HEK293T (cell line): ENCODE measurements at regions of chr12 and their contacts with region 1.

Region 1: GRCh38 chr12:53180220-53180930 is at the starts of genes CSAD and ZNF740:
- DNase-seq: peak; percentile 98

Region 2: DNA sequence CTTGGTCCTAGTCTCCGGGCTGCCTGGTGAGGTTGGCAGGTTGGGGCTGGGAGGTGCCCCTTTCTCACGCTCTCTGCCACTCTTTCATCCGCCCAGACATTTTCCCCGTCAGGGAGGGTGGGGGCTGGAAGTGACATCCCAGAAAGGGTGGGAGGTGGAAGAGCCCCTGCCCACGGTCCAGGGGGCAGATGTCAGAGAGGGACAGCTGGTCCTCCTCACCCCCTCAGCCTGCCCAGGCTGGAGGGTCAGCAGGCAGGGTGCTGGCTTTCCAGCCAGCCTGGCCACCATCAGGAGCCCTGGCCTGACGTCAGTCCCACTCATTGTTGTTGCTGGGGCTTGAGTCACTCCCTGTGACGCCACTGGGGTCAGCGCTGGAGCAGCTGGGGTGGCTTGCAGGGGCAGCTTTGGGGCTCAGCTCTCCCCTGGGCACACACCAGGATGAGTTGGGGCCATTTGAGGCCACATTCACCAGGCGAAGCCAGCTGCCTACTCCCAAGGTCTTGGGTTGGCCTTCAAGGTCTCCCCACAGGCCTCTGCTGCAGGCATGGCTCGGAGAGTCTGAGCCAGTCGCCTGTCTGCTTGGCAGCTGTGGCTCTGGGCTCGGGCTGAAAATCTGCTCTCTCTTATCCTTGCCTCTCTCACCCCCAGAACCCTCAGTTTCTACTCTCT is 1116.3 kb before region 1 on chr12:
- CTCF ChIA-PET with region 1: no interaction called
- POLR2A ChIA-PET with region 1: no interaction called
- DNase-seq: no peak

Region 3: DNA sequence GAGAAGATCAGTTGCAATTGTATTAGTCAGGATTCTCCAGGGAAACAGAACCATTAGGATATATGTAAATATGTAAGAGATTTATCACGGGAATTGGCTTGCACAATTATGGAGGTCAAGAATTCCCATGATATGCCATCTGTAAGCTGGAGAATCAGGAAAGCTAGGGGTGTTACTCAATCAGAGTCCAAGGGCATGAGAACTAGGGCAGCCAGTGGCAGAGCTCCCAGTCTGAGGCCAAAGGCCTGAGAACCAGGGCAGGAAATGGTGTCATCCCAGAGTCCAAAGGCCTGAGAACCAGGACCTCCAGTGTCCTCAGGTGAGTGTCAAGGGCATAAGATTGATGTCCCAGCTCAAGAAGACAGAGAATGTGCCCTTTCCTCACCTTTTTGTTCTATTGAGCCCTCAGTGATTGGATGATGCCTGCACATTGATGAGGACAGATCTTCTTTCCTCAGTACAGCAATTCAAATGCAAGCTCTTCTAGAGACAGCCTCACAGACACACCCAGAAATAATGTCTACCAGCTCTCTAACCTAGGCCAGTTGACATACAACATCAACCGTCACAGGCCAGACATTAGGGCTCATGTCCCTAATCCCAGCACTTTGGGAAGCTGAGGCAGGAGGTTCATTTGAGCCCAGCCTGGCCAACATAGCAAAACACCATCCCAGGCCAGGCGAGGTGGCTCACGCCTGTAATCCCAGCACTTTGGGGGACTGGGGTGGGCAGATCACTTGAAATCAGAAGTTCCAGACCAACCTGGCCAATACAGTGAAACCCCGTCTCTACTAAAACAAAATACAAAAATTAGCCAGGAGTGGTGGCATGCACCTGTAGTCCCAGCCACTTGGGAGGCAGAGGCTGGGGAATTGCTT is 34.8 kb before region 1 on chr12:
- CTCF ChIA-PET with region 1: no interaction called
- POLR2A ChIA-PET with region 1: no interaction called
- DNase-seq: no peak

Region 4: GRCh38 chr12:53195516-53196420 is 15.4 kb after region 1 on chr12:
- CTCF ChIA-PET with region 1: no interaction called
- POLR2A ChIA-PET with region 1: interaction called, 23 read pairs
- DNase-seq: no peak

Region 5: DNA sequence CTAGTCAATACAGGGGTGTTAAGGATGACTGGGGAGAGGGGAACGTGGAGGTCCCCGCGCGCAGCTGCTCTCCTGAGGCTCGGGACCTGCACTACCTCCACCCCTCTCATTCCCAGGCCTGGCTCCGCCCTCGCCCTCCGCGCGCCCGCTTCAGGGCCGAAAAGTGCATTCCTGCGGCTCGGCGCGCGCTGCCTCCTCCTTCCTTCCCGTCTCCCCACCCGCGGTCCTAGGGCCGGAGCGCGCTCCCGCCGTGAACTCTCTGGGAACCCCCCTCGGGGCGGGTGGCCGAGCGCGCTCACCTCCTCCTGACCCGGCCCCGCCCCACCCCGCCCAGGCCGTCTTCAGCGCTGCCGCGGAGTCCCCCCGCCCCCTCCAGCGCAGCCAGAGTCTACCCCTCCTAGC is 40.4 kb after region 1 on chr12:
- CTCF ChIA-PET with region 1: no interaction called
- POLR2A ChIA-PET with region 1: no interaction called
- DNase-seq: peak; percentile 87